ENCODE measurements at regions of chr14 and their contacts with region 1.

Region 1: DNA sequence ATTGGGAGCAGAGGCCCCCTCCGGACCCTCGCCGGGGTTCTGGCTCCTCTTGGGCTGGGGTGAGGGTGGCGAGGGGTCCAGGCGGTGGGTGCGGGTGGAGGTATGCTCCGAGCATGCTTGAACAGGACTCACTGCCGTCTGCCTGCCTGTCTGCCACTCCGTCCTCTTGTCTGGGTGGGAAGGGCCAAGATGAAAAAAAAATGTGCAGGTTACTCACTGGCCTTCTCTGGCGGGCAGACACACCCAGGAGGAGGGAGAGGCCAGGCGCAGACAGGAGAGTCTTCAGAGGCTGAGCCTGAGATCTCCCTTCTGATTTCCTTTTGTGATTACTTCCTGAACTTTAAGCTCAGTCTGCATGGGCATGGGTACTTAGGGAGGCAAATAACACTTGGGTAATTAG is 76.1 kb downstream of the STON2 start:
- DNase-seq: peak; percentile 84
- ATAC-seq: peak; percentile 99
- H3K4me3 ChIP-seq: peak overlapping the region; percentile 76
- H3K27ac ChIP-seq: peak overlapping the region; percentile 47
- H3K4me1 ChIP-seq: peaks cover 27% of the 10 kb centered on the region
- H3K27me3 ChIP-seq: no peaks in the 10 kb centered on the region
- CTCF ChIP-seq: no peak

Region 2: GRCh38 chr14:81303248-81304221 is 20.5 kb before region 1 on chr14:
- CTCF ChIA-PET with region 1: no interaction called
- POLR2A ChIA-PET with region 1: interaction called, 5 read pairs
- intact Hi-C with region 1: loop called (anchors 1 kb)
- DNase-seq: peak; percentile 97
- ATAC-seq: peak; percentile 98
- H3K4me3 ChIP-seq: no peak overlapping the region
- H3K27ac ChIP-seq: peak overlapping the region; percentile 69
- H3K4me1 ChIP-seq: peaks cover 22% of the 10 kb centered on the region
- H3K27me3 ChIP-seq: no peaks in the 10 kb centered on the region
- CTCF ChIP-seq: no peak

Region 3: DNA sequence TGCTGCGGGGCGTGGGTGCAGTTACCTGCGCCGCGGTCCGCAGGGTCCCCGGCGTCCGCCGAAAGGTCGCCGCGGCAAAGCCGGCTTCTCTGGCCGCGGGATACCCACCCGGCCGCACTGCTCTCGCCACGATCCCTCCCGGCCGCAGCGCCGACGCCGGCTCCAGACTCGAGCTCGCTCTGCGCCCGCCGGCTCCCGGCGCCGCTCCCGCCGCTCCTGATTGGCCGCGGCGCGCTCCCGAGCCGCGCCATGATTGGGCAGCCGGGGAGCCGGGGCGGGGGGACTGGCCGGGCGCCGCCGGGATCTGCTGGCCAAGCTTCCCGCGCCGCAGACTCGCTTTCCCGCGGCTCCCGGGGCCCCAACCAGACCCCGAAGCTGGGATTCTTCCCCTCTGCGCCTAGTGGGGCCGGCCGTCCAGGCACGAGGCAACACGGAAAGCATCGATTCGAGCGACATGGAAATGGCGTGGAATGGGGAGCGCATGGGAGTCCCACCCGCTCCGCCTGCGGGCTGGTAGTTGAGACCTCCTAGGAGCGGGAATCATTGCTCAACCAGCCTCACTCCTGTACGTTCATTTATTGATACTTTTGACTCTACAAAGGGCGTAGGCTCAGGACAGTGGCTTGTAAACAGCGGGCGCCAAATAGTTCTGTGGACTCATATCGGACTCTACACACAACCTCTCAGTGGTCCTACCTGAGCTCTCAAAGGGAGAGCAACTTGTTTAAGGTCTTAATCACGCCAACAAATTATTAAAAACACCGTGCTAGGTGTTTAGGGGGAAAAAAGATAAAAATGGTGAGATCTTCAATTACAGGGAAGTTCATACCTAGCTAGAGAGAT is 112.5 kb after region 1 on chr14:
- CTCF ChIA-PET with region 1: no interaction called
- POLR2A ChIA-PET with region 1: interaction called, 3 read pairs
- intact Hi-C with region 1: loop called (anchors 5 kb)
- DNase-seq: peak; percentile 87
- ATAC-seq: peak; percentile 93
- H3K4me3 ChIP-seq: peak overlapping the region; percentile 72
- H3K27ac ChIP-seq: no peak overlapping the region
- H3K4me1 ChIP-seq: peaks cover 13% of the 10 kb centered on the region
- H3K27me3 ChIP-seq: peaks cover 18% of the 10 kb centered on the region; the same call in 1 of the 2 replicates
- CTCF ChIP-seq: no peak

Region 4: DNA sequence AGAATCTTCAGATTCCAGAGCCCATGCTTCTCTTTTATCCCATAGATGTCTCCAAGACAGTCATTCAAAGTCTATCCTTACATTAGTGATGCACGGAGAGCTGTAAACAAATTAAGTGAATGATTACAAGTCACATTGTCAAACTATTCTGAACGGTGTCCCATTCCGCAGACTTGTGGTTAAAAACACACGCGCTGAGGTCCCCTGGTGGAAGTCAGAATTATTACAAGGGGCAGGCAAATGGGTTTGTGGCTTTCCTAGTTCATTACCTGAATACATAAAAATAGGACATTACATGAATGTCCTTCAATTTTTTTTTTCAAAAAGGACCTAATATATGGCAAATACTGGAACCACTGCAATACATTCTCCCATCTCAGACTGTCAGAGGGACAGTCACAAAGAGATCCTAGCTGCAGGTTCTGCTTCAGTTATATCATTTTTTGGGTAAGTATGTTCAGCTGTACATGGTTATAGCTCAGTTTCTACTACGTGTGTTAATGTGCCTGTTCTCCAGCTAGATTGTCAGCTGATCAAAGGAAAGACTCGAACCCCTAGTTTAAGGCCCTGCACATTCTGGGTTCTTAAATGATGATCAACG is 129.2 kb after region 1 on chr14:
- CTCF ChIA-PET with region 1: no interaction called
- POLR2A ChIA-PET with region 1: no interaction called
- intact Hi-C with region 1: loop called (anchors 5 kb)
- DNase-seq: peak; percentile 78
- ATAC-seq: peak; percentile 77
- H3K4me3 ChIP-seq: no peak overlapping the region
- H3K27ac ChIP-seq: no peak overlapping the region
- H3K4me1 ChIP-seq: no peaks in the 10 kb centered on the region
- H3K27me3 ChIP-seq: no peaks in the 10 kb centered on the region
- CTCF ChIP-seq: peak; percentile 92

Region 5: GRCh38 chr14:81464247-81465002 is 140.4 kb after region 1 on chr14:
- CTCF ChIA-PET with region 1: no interaction called
- POLR2A ChIA-PET with region 1: no interaction called
- intact Hi-C with region 1: no loop called
- DNase-seq: peak; percentile 88
- ATAC-seq: peak; percentile 44; the same call in 1 of the 2 replicates
- H3K4me3 ChIP-seq: peak overlapping the region; percentile 61
- H3K27ac ChIP-seq: no peak overlapping the region
- H3K4me1 ChIP-seq: no peaks in the 10 kb centered on the region
- H3K27me3 ChIP-seq: no peaks in the 10 kb centered on the region
- CTCF ChIP-seq: peak; percentile 96